Activated CD4-positive, alpha-beta memory T cell treated with anti-CD3 and anti-CD28 coated beads for 36 hours (primary cell): ENCODE measurements at regions of chr1 and their contacts with region 1.

Region 1: GRCh38 chr1:151098126-151098525 is 27.6 kb downstream of the GABPB2 start:
- DNase-seq: no peak
- H3K4me3 Mint-ChIP-seq: no peak overlapping the region
- H3K27ac Mint-ChIP-seq: no peak overlapping the region
- H3K4me1 Mint-ChIP-seq: no peaks in the 10 kb centered on the region
- H3K27me3 Mint-ChIP-seq: no peaks in the 10 kb centered on the region

Region 2: DNA sequence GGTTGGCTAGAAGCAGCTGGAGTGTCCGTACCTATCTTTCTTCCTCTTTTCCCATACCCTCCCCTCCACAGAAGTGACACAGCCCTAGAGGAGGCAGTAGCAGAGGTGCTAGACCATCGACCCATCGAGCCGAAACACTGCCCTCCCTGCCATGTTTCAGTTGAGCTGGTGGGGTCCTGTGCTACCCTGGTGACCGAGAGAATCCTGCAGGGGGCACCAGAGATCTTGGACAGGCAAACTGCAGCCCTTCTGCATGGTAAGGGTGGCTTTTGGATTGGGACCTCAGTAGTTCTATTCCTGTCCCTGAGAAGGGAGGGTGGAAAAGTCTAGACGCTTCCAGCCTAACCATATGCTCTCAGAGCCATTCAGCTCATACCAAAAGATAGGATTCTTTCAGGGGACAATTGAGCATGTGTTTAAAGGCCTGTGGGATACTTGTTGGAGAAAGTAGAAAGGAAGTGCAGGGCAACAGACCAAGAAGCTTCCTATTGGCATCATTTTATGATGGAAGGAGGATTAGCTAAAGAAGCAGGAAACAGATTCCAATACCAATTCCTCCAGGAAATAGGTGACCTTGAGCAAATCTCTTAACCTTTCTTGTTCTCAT is 73.5 kb before region 1 on chr1:
- CTCF ChIA-PET with region 1: interaction called, 23 read pairs
- POLR2A ChIA-PET with region 1: no interaction called
- intact Hi-C with region 1: no loop called
- DNase-seq: peak; percentile 88
- H3K4me3 Mint-ChIP-seq: no peak overlapping the region
- H3K27ac Mint-ChIP-seq: peak overlapping the region; percentile 42
- H3K4me1 Mint-ChIP-seq: peaks cover 5% of the 10 kb centered on the region
- H3K27me3 Mint-ChIP-seq: no peaks in the 10 kb centered on the region

Region 3: GRCh38 chr1:151130987-151131586 is 33.0 kb after region 1 on chr1:
- CTCF ChIA-PET with region 1: interaction called, 14 read pairs
- POLR2A ChIA-PET with region 1: no interaction called
- intact Hi-C with region 1: no loop called
- DNase-seq: peak; percentile 90
- H3K4me3 Mint-ChIP-seq: peak overlapping the region; percentile 72
- H3K27ac Mint-ChIP-seq: no peak overlapping the region
- H3K4me1 Mint-ChIP-seq: peaks cover 13% of the 10 kb centered on the region
- H3K27me3 Mint-ChIP-seq: peaks cover 4% of the 10 kb centered on the region

Region 4: GRCh38 chr1:151189638-151190445 is 91.7 kb after region 1 on chr1 and contains the start of gene VPS72:
- CTCF ChIA-PET with region 1: interaction called, 17 read pairs
- POLR2A ChIA-PET with region 1: interaction called, 3 read pairs
- intact Hi-C with region 1: no loop called
- DNase-seq: peak; percentile 93
- H3K4me3 Mint-ChIP-seq: peak within 1 kb of the TSS; percentile 97
- H3K27ac Mint-ChIP-seq: peak within 1 kb of the TSS; percentile 94
- H3K4me1 Mint-ChIP-seq: peaks cover 22% of the 10 kb centered on the region
- H3K27me3 Mint-ChIP-seq: no peaks in the 10 kb centered on the region
- total RNA-seq, gene VPS72: 77.6 to 80.4 TPM

Region 5: DNA sequence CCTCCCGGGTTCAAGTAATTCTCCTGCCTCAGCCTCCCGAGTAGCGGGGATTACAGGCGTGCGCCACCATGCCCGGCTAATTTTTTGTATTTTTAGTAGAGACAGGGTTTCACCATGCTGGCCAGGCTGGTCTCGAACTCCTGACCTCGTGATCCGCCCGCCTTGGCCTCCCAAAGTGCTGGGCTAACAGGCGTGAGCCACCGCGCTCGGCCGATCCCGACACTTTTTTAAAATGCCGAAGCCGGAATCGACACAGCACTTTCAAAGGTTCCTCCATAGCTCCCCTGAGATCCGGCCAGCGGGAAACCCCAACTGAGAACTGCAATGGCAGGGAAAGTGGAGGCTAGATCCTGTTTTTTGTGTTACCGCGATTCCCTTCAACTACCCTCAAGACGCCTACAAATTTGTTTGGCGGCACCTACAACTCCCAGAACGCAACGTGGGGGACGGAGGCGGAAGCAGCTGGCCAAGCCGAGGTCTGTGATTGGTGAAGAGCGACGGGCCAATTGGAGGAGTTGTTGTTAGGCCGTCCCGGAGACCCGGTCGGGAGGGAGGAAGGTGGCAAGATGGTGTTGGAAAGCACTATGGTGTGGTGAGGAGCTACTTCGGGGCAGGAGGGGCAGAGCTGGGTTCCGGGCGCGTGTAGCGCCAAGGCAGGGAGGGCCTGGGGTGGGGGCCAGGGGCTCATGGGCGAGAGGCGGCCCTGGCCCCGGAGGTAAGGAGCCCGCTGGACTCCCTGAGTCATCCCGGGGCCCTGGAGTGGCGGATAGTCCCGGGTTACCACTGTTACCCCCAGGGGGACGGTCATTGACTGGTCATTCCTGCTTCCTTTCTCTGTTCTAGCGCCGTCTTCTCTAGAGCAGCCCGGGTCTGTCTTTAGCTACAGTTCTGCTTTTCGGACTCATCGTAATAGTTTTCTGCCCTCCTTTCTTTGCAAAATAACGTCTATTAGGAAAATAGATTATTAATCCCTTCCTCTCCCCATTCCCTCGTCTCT is 156.4 kb after region 1 on chr1 and contains the start of gene PSMD4:
- CTCF ChIA-PET with region 1: interaction called, 21 read pairs
- POLR2A ChIA-PET with region 1: interaction called, 3 read pairs
- intact Hi-C with region 1: no loop called
- DNase-seq: peak; percentile 97
- H3K4me3 Mint-ChIP-seq: peak within 1 kb of the TSS; percentile 92
- H3K27ac Mint-ChIP-seq: peak within 1 kb of the TSS; percentile 81
- H3K4me1 Mint-ChIP-seq: peaks cover 25% of the 10 kb centered on the region
- H3K27me3 Mint-ChIP-seq: peaks cover 2% of the 10 kb centered on the region
- total RNA-seq, gene PSMD4: 212 to 227 TPM